ENCODE measurements at regions of chr3 and their contacts with region 1.

Region 1: GRCh38 chr3:142148792-142149672 is at the start of gene TFDP2:
- DNase-seq: peak; percentile 88
- ATAC-seq: peak; percentile 98
- H3K4me3 ChIP-seq: peak within 1 kb of the TSS; percentile 56 to 85 (median 74)
- H3K4me3 Mint-ChIP-seq: peak within 1 kb of the TSS; percentile 88
- H3K27ac ChIP-seq: peak within 1 kb of the TSS in 1 of 2 donors; percentile 76
- H3K27ac Mint-ChIP-seq: peak within 1 kb of the TSS; percentile 87
- H3K4me1 ChIP-seq: peaks cover 7 to 15% of the 10 kb centered on the region in 2 donors
- H3K4me1 Mint-ChIP-seq: peaks cover 19% of the 10 kb centered on the region
- H3K27me3 ChIP-seq: no peaks in the 10 kb centered on the region
- H3K27me3 Mint-ChIP-seq: no peaks in the 10 kb centered on the region
- CTCF ChIP-seq: no peak
- total RNA-seq, gene TFDP2: 31.7 and 32.9 TPM in 2 replicates

Region 2: GRCh38 chr3:142226484-142226883 is 77.5 kb after region 1 on chr3:
- CTCF ChIA-PET with region 1: no interaction called
- POLR2A ChIA-PET with region 1: no interaction called
- intact Hi-C with region 1: loop called (anchors 1 kb)
- DNase-seq: no peak
- ATAC-seq: no peak
- H3K4me3 ChIP-seq: no peak overlapping the region
- H3K4me3 Mint-ChIP-seq: peak overlapping the region; percentile 70
- H3K27ac ChIP-seq: no peak overlapping the region
- H3K27ac Mint-ChIP-seq: peak overlapping the region; percentile 32
- H3K4me1 ChIP-seq: peaks cover 3 to 8% of the 10 kb centered on the region in 2 donors
- H3K4me1 Mint-ChIP-seq: peaks cover 9% of the 10 kb centered on the region
- H3K27me3 ChIP-seq: no peaks in the 10 kb centered on the region
- H3K27me3 Mint-ChIP-seq: no peaks in the 10 kb centered on the region
- CTCF ChIP-seq: no peak

Measured in B cell (primary cell).